Cardiac septum (tissue), 1 donor: ENCODE measurements at regions of chr7 and their contacts with region 1.

Region 1: DNA sequence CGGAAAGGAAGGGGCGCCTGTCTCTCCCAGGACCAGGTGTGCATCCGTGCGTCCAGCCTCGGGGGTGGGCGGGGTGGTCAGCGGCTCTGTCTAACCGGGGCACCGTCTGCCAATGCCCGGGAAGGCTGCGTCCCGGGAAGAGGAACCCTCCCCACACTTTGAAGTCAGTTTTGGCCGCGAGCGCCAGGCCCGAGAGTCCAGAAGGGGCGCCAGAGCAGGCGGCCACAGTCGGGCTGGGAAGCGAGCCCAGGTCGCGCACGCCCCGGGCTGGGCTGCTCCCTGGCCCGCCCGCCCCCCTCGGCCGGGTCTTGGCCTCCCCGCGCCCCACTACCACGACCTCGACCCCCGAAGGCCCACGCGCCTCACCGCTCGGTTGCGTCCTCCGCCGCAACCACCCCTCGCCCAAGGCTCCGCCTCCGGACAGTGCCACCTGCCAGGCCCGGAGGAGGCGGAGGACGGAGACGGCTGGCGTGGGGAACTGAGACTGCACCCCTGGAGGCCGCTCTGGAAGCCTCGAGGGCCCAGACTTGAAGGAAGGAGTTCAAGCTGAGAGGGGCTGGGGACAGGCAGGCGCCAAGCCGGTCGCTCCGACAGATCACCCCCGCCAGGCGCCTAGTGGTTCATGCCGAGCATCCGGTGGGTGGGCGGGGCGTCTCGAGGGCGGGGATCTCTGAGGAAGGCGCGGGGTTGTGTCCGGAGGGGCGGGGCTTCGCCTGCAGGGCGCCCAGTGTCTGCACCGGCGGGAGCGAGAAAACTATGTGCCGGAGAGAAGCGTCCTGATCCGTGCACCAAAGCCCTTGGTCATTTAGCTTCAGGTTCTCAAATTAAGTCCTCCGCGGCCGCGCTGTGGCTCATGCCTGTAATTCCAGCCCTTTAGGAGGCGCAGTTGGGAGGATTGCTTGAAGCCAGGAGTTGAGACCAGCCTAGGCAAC is at the start of gene BRAT1:
- DNase-seq: peak; percentile 99
- total RNA-seq, gene BRAT1: 12.8 TPM

Region 2: GRCh38 chr7:2477447-2478398 is 77.7 kb before region 1 on chr7:
- intact Hi-C with region 1: loop called (anchors 5 kb)
- DNase-seq: no peak